CD8-positive, alpha-beta T cell (primary cell): ENCODE measurements at regions of chr4 and their contacts with region 1.

Region 1: DNA sequence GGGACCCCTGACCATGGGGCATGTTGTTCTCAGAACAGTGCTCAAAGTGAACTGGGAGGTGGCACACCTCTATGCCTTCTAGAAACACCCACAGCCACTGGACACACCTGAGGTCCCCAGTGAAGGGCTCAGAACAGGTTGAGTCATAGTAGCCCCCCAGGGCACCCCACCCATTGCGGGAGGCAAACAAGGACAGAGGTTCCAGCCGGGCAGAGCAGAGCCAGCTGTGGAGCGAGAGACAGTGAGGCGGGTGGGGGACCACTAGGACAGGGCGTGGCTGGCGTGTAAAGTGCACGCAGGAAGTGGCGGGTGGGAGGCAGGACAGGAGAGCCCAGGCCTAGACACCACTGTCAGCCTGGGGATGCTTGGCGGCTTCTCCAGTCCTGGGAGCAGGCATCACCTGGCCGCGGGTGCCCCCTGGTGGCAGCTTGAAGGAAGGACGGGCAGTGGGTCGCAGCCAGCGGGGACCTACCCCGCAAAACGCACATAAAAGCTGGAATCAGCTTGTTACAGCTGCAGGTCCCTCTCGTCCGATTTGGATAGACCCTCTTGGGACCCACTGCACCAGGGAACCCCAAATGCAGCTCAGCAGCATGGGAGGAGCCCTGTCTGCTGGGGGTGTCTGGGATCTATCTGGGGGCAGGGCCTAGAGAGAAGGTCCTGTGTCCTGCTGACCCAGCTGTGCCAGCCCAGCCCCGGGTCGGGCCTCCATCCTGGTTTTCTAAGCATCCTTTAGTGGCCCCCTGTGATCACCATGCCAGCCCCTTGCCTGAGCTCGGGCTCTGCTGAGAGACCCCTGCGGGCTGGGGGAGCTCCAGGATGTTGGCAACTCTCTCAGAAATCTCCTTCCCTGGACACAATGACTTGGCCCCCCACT is 57.6 kb downstream of the WFS1 start:
- DNase-seq: peak; percentile 58 to 89 (median 78)
- ATAC-seq: peak; percentile 68
- H3K4me3 ChIP-seq: no peak overlapping the region
- H3K4me3 Mint-ChIP-seq: no peak overlapping the region
- H3K27ac ChIP-seq: no peak overlapping the region
- H3K27ac Mint-ChIP-seq: no peak overlapping the region
- H3K4me1 ChIP-seq: no peaks in the 10 kb centered on the region
- H3K4me1 Mint-ChIP-seq: peaks cover 1% of the 10 kb centered on the region
- H3K27me3 ChIP-seq: peaks cover 0 to 4% of the 10 kb centered on the region in 2 experiments
- H3K27me3 Mint-ChIP-seq: peaks cover 31% of the 10 kb centered on the region
- CTCF ChIP-seq: peak; percentile 86

Region 2: GRCh38 chr4:5998333-5998936 is 328.8 kb before region 1 on chr4:
- CTCF ChIA-PET with region 1: interaction called, 17 read pairs
- POLR2A ChIA-PET with region 1: no interaction called
- intact Hi-C with region 1: no loop called
- DNase-seq: peak in 7 of 9 experiments; percentile 19 to 65 (median 39)
- ATAC-seq: peak; percentile 36
- H3K4me3 ChIP-seq: no peak overlapping the region
- H3K4me3 Mint-ChIP-seq: no peak overlapping the region
- H3K27ac ChIP-seq: no peak overlapping the region
- H3K27ac Mint-ChIP-seq: no peak overlapping the region
- H3K4me1 ChIP-seq: no peaks in the 10 kb centered on the region
- H3K4me1 Mint-ChIP-seq: no peaks in the 10 kb centered on the region
- H3K27me3 ChIP-seq: peaks cover 0 to 3% of the 10 kb centered on the region in 2 experiments
- H3K27me3 Mint-ChIP-seq: peaks cover 21% of the 10 kb centered on the region
- CTCF ChIP-seq: peak; percentile 69

Region 3: DNA sequence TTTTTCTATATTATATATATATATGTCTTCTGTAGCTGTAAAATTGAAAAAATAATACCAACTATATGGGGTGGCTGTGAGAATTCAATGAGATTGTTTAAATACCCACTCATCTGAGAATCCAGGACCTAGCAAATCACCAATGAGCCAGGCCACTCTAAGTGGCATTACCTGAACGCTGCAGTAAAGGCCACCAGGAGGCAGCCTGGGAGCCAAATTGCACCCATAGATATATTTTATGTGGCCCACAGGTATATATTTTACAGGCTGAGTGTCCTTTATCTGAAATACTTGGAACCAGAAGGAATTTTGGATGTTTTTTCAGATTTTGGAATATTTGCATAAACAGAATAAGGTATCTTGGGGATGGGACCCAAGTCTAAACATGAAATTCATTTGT is 250.9 kb before region 1 on chr4:
- CTCF ChIA-PET with region 1: interaction called, 3 read pairs
- POLR2A ChIA-PET with region 1: no interaction called
- intact Hi-C with region 1: loop called in 1 of 2 experiments (anchors 5 kb)
- DNase-seq: peak in 2 of 9 experiments; percentile 10 to 13
- ATAC-seq: no peak
- H3K4me3 ChIP-seq: no peak overlapping the region
- H3K4me3 Mint-ChIP-seq: no peak overlapping the region
- H3K27ac ChIP-seq: no peak overlapping the region
- H3K27ac Mint-ChIP-seq: no peak overlapping the region
- H3K4me1 ChIP-seq: no peaks in the 10 kb centered on the region
- H3K4me1 Mint-ChIP-seq: no peaks in the 10 kb centered on the region
- H3K27me3 ChIP-seq: no peaks in the 10 kb centered on the region
- H3K27me3 Mint-ChIP-seq: peaks cover 3% of the 10 kb centered on the region
- CTCF ChIP-seq: no peak

Region 4: DNA sequence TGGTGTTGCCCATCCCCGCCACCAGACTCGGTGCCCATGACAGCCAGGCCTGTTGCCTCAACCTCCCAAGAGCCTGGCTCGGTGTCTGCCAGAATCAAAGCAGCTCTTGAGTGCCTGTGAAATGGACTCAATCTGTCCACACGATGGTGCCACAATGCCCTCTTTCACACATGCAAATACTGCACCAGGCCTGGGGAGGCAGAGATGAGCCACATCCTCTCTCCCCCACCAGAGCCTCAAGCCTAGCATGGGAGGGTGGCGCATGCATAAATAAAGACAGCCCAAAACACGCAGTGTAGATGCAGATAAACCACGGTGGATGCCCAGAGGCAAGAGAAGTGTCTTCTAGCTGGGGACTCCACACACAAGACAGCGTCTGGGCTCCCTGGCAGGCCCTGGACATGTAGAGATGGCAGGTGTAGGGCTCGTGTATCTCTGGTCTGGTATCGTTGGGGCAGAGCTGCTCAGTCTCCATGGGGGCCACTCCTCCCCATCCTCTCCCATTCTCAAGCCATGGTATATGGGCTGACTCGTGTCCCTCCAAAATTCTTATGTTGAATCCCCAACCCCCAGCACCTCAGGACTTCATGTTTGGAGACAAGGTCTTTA is 192.6 kb before region 1 on chr4:
- CTCF ChIA-PET with region 1: interaction called, 14 read pairs
- POLR2A ChIA-PET with region 1: no interaction called
- intact Hi-C with region 1: loop called in 1 of 2 experiments (anchors 1 kb)
- DNase-seq: peak; percentile 7 to 86 (median 42)
- ATAC-seq: peak; percentile 88
- H3K4me3 ChIP-seq: no peak overlapping the region
- H3K4me3 Mint-ChIP-seq: no peak overlapping the region
- H3K27ac ChIP-seq: peak overlapping the region in 1 of 2 experiments; percentile 4
- H3K27ac Mint-ChIP-seq: no peak overlapping the region
- H3K4me1 ChIP-seq: no peaks in the 10 kb centered on the region
- H3K4me1 Mint-ChIP-seq: peaks cover 6% of the 10 kb centered on the region
- H3K27me3 ChIP-seq: no peaks in the 10 kb centered on the region
- H3K27me3 Mint-ChIP-seq: no peaks in the 10 kb centered on the region
- CTCF ChIP-seq: peak; percentile 38

Region 5: GRCh38 chr4:6264225-6264540 is 63.1 kb before region 1 on chr4:
- CTCF ChIA-PET with region 1: interaction called, 18 read pairs
- POLR2A ChIA-PET with region 1: no interaction called
- intact Hi-C with region 1: loop called (anchors 1 to 5 kb)
- DNase-seq: peak in 4 of 9 experiments; percentile 17 to 47 (median 32)
- ATAC-seq: no peak
- H3K4me3 ChIP-seq: no peak overlapping the region
- H3K4me3 Mint-ChIP-seq: no peak overlapping the region
- H3K27ac ChIP-seq: no peak overlapping the region
- H3K27ac Mint-ChIP-seq: no peak overlapping the region
- H3K4me1 ChIP-seq: peaks cover 4% of the 10 kb centered on the region
- H3K4me1 Mint-ChIP-seq: peaks cover 10% of the 10 kb centered on the region
- H3K27me3 ChIP-seq: no peaks in the 10 kb centered on the region
- H3K27me3 Mint-ChIP-seq: peaks cover 17% of the 10 kb centered on the region
- CTCF ChIP-seq: no peak

Region 6: GRCh38 chr4:6269616-6270511 is 57.4 kb before region 1 on chr4 and contains the start of gene WFS1:
- CTCF ChIA-PET with region 1: interaction called, 18 read pairs
- POLR2A ChIA-PET with region 1: no interaction called
- intact Hi-C with region 1: loop called in 1 of 2 experiments (anchors 5 kb)
- DNase-seq: peak; percentile 93 to 99 (median 97)
- ATAC-seq: peak; percentile 98
- H3K4me3 ChIP-seq: peak within 1 kb of the TSS; percentile 56 to 70
- H3K4me3 Mint-ChIP-seq: peak within 1 kb of the TSS; percentile 87
- H3K27ac ChIP-seq: peak within 1 kb of the TSS in 1 of 2 experiments; percentile 11
- H3K27ac Mint-ChIP-seq: peak within 1 kb of the TSS; percentile 41
- H3K4me1 ChIP-seq: peaks cover 13% of the 10 kb centered on the region
- H3K4me1 Mint-ChIP-seq: peaks cover 20% of the 10 kb centered on the region
- H3K27me3 ChIP-seq: no peaks in the 10 kb centered on the region
- H3K27me3 Mint-ChIP-seq: no peaks in the 10 kb centered on the region
- CTCF ChIP-seq: no peak
- total RNA-seq, gene WFS1: 1.2 to 1.8 TPM

Region 7: DNA sequence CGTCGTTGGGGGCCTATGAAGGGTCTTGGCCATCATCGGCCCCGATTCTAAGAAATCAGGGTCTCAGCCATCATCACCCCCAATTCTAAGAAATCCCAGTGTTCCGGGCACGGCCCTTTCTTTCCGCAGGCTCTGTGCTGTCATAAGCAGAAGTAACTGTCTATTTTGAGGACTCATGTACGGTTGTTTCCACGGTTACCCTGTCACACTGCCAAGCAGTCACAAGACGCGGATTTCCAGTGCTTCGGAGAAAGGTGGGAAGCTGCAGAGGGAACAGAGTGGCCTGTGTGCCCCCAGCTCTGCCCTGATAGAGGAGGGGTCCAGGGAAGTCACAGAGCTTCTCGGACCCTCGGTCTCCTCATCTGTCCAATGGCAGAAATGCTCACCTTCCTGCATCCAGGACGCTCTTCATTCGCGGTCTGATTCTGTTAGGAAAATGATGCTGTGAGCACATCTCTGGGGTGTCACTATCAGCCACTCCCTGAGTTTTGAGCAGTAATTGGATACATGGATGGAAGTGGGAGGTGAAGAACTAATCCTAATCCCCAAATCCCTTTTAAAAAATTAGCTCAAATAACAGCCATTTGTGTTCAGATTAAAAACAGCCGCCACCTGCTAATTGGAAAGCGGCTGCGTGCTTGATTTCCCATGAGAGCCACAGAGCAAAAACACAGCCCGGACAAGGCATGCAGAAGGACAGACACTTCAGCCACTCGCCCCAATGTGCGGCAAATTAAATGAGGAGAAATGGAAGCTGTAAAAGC is 15.4 kb after region 1 on chr4:
- CTCF ChIA-PET with region 1: interaction called, 20 read pairs
- POLR2A ChIA-PET with region 1: no interaction called
- intact Hi-C with region 1: no loop called
- DNase-seq: no peak
- ATAC-seq: no peak
- H3K4me3 ChIP-seq: no peak overlapping the region
- H3K4me3 Mint-ChIP-seq: no peak overlapping the region
- H3K27ac ChIP-seq: no peak overlapping the region
- H3K27ac Mint-ChIP-seq: no peak overlapping the region
- H3K4me1 ChIP-seq: no peaks in the 10 kb centered on the region
- H3K4me1 Mint-ChIP-seq: peaks cover 11% of the 10 kb centered on the region
- H3K27me3 ChIP-seq: peaks cover 0 to 3% of the 10 kb centered on the region in 2 experiments
- H3K27me3 Mint-ChIP-seq: peaks cover 28% of the 10 kb centered on the region
- CTCF ChIP-seq: no peak